AG04449 (cell line): ENCODE measurements at regions of chr14 and their contacts with region 1.

Region 1: DNA sequence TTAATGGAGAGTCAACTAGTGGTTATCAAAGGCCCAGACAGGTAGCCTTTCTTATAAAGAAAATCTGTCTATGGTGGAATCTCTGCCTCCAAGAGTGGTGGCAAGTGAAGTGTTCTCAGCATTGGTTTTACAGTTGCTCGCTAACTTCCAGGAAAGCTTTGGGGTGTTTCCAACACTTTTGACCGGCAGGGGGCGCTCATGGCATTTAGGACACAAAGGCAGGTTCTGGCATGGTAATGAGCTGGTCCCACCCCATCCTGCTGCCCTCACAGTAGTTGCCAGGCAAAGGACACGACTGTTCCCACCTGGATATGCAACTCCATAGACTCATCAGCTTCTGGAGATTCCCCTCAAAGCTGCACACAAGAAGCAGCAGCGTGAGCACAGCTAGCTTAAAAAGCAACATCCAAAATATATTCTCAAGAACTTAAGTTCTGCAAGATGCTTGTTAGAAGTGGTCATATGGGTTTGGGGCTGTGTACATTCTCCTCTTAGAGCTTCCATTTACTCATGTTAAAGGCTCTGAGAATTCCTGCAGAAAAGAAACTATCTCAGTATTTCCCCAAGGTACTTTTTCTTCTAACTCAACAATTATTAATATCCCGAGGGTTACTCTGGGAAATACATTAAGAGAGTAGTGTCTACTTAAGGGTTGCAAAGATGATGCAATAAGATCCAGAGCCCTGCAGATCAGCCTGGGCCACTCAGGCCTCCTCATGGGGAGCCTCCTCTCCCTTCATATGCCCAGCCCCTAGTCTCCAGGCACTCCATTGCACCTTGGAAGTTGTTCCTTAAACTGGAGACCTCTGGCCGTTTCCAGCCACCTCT is 14.8 kb downstream of the PROX2 start:
- DNase-seq: no peak
- H3K4me3 ChIP-seq: no peak overlapping the region
- CTCF ChIP-seq: peak; percentile 84

Region 2: DNA sequence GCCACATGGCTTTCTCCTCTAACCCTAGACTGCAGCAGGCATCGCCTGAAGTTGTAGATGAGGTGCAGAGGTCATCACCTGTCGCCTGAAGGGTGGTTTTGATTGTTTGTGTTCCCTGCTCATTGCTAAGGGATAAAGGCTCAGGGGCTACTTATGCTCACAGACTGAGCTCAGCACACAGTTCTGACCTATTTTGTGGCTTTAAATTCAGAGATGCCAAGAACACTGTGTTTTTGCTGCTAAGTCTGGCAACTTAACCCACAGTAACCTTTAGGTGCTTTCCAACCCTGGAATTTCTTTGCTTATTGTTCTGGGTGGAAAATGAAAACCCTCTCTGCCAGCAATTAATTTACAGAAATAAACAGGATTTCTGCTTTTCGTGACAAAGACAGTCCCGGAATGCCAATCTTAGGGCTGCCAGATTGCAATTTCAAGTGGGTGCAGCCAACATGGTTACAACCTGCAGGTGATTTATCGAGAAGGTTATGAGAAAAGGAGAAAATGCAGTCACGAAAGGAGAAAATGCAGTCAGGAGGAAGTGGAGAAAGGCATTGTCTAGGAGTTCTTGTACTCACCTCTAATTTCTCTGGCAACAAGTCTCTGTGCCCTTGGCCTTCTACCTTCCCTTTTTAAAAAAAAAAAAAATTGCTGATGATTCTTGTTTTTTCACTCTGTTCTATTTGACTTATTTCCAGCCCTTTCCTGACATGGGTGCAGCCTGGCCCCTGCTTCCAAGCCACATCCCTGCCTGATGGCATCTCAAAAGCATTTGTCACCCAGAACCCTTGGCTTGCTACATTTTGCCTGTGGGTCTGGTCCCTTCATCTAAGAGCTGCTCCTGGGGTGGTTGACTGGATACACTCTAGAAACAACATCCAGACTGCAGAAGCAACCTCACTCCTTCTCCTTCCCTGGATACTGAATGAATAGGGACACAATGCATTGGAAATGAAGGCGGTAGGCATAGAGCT is 391.3 kb before region 1 on chr14:
- CTCF ChIA-PET with region 1: no interaction called
- POLR2A ChIA-PET with region 1: no interaction called
- DNase-seq: no peak
- H3K4me3 ChIP-seq: no peak overlapping the region
- CTCF ChIP-seq: no peak

Region 3: GRCh38 chr14:74841230-74842207 is 19.6 kb before region 1 on chr14:
- CTCF ChIA-PET with region 1: interaction called, 70 read pairs
- POLR2A ChIA-PET with region 1: no interaction called
- DNase-seq: no peak
- H3K4me3 ChIP-seq: no peak overlapping the region
- CTCF ChIP-seq: no peak

Region 4: GRCh38 chr14:74881431-74882361 is 20.6 kb after region 1 on chr14 and contains the start of gene DLST:
- CTCF ChIA-PET with region 1: interaction called, 568 read pairs
- POLR2A ChIA-PET with region 1: interaction called, 4 read pairs
- DNase-seq: no peak
- H3K4me3 ChIP-seq: peak within 1 kb of the TSS; percentile 91
- CTCF ChIP-seq: no peak

Region 5: DNA sequence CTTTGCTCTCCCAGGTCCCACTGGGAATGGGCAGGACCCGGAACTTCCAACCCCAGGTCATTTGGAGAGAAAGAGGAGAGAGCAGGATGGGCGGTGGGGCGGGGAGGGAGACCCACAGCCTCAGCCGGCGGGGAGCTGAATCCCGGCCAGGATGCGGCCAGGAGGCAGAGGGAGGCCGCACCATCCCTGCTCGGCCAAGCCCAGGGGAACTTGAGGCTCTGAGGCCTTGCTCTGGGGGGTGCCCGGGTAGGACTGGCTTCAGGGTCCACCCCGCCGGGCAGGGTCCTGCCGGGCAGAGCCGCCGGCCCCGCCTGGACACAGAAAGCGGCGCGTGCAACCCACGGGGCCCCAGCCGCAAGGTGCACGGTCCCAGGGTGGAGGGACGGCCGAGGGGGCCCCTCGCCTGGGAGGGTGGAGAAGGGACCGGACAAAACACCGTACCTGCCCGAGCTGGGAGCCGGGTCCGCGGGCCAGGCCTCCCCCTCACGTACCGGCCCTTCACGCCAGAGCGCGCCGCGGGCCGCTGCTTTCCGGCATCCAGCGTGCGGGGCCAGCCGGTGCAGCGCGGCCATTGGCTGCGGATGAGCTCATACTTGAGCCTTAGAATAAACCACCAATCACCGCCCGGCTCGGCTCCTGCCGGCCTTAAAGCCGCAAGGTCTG is 61.8 kb after region 1 on chr14 and contains the start of gene RPS6KL1:
- CTCF ChIA-PET with region 1: interaction called, 14 read pairs
- POLR2A ChIA-PET with region 1: no interaction called
- DNase-seq: no peak
- H3K4me3 ChIP-seq: peak within 1 kb of the TSS; percentile 49
- CTCF ChIP-seq: no peak

Region 6: GRCh38 chr14:75113932-75114539 is 252.9 kb after region 1 on chr14:
- CTCF ChIA-PET with region 1: no interaction called
- POLR2A ChIA-PET with region 1: no interaction called
- DNase-seq: no peak
- H3K4me3 ChIP-seq: no peak overlapping the region
- CTCF ChIP-seq: no peak

Region 7: GRCh38 chr14:75660630-75661494 is 799.7 kb after region 1 on chr14 and contains the starts of genes ERG28 and TTLL5:
- CTCF ChIA-PET with region 1: no interaction called
- POLR2A ChIA-PET with region 1: no interaction called
- DNase-seq: peak; percentile 93
- H3K4me3 ChIP-seq: peak within 1 kb of the TSS; percentile 98
- CTCF ChIP-seq: no peak